Natural killer cell (primary cell): ENCODE measurements at regions of chr14 and their contacts with region 1.

Region 1: GRCh38 chr14:58107947-58108552 is 44.0 kb downstream of the ARMH4 start:
- DNase-seq: peak in 1 of 2 donors; percentile 70
- ATAC-seq: peak in 2 of 3 donors; percentile 54 to 55
- H3K4me3 ChIP-seq: no peak overlapping the region
- H3K4me3 Mint-ChIP-seq: no peak overlapping the region
- H3K27ac ChIP-seq: no peak overlapping the region
- H3K27ac Mint-ChIP-seq: no peak overlapping the region
- H3K4me1 ChIP-seq: no peaks in the 10 kb centered on the region
- H3K4me1 Mint-ChIP-seq: no peaks in the 10 kb centered on the region
- H3K27me3 ChIP-seq: no peaks in the 10 kb centered on the region
- H3K27me3 Mint-ChIP-seq: peaks cover 10 to 15% of the 10 kb centered on the region in 2 donors
- CTCF ChIP-seq: peak; percentile 62

Region 2: DNA sequence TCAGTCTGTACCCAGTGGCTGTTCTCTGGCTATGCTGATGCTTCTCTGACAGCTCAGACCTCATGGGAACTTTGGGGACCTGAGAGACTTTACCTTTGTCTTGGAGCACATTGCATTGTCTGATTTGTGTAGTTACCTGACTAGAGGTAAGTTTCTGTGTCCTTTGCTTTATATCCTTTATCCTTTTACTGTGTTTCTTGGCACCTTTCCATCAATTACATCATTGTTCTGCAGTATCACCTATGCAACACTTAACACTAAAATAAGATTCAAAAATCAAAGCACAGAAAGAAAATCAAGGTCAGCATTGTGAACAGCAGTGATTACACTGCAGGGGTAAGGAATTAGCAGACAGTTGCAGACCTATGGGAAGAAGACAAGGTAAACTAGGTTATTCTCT is 286.0 kb before region 1 on chr14:
- intact Hi-C with region 1: no loop called
- DNase-seq: no peak
- ATAC-seq: no peak
- H3K4me3 ChIP-seq: no peak overlapping the region
- H3K4me3 Mint-ChIP-seq: no peak overlapping the region
- H3K27ac ChIP-seq: no peak overlapping the region
- H3K27ac Mint-ChIP-seq: no peak overlapping the region
- H3K4me1 ChIP-seq: no peaks in the 10 kb centered on the region
- H3K4me1 Mint-ChIP-seq: no peaks in the 10 kb centered on the region
- H3K27me3 ChIP-seq: no peaks in the 10 kb centered on the region
- H3K27me3 Mint-ChIP-seq: no peaks in the 10 kb centered on the region
- CTCF ChIP-seq: no peak

Region 3: GRCh38 chr14:58199726-58200479 is 91.9 kb after region 1 on chr14 and contains the start of gene ACTR10:
- intact Hi-C with region 1: no loop called
- DNase-seq: peak; percentile 86 to 91
- ATAC-seq: peak; percentile 82 to 94 (median 86)
- H3K4me3 ChIP-seq: peak within 1 kb of the TSS; percentile 96
- H3K4me3 Mint-ChIP-seq: peak within 1 kb of the TSS; percentile 96
- H3K27ac ChIP-seq: peak within 1 kb of the TSS; percentile 96
- H3K27ac Mint-ChIP-seq: peak within 1 kb of the TSS; percentile 94 to 98
- H3K4me1 ChIP-seq: peaks cover 21% of the 10 kb centered on the region
- H3K4me1 Mint-ChIP-seq: peaks cover 31 to 36% of the 10 kb centered on the region in 2 donors
- H3K27me3 ChIP-seq: no peaks in the 10 kb centered on the region
- H3K27me3 Mint-ChIP-seq: no peaks in the 10 kb centered on the region
- CTCF ChIP-seq: no peak
- total RNA-seq, gene ACTR10: 58.0 to 61.0 (median 60.7) TPM

Region 4: GRCh38 chr14:58364316-58364715 is 256.3 kb after region 1 on chr14:
- intact Hi-C with region 1: loop called (anchors 2 kb)
- DNase-seq: no peak
- ATAC-seq: no peak
- H3K4me3 ChIP-seq: no peak overlapping the region
- H3K4me3 Mint-ChIP-seq: no peak overlapping the region
- H3K27ac ChIP-seq: no peak overlapping the region
- H3K27ac Mint-ChIP-seq: peak overlapping the region in 1 of 2 donors; percentile 33
- H3K4me1 ChIP-seq: no peaks in the 10 kb centered on the region
- H3K4me1 Mint-ChIP-seq: no peaks in the 10 kb centered on the region
- H3K27me3 ChIP-seq: no peaks in the 10 kb centered on the region
- H3K27me3 Mint-ChIP-seq: no peaks in the 10 kb centered on the region
- CTCF ChIP-seq: no peak